ENCODE measurements at regions of chr12 and their contacts with region 1.

Region 1: GRCh38 chr12:121888478-121889266 is at the start of gene PSMD9:
- DNase-seq: peak; percentile 98
- ATAC-seq: peak; percentile 99 to 100 (median 99)
- H3K4me3 ChIP-seq: peak within 1 kb of the TSS; percentile 62 to 99 (median 92)
- H3K27ac ChIP-seq: peak within 1 kb of the TSS; percentile 79 to 98 (median 96)
- H3K4me1 ChIP-seq: peaks cover 8 to 31% (median 24%) of the 10 kb centered on the region in 9 donors
- H3K27me3 ChIP-seq: no peaks in the 10 kb centered on the region
- CTCF ChIP-seq: peak; percentile 35 to 79 (median 66)
- total RNA-seq, gene PSMD9: 29.3 to 39.9 (median 34.4) TPM

Region 2: DNA sequence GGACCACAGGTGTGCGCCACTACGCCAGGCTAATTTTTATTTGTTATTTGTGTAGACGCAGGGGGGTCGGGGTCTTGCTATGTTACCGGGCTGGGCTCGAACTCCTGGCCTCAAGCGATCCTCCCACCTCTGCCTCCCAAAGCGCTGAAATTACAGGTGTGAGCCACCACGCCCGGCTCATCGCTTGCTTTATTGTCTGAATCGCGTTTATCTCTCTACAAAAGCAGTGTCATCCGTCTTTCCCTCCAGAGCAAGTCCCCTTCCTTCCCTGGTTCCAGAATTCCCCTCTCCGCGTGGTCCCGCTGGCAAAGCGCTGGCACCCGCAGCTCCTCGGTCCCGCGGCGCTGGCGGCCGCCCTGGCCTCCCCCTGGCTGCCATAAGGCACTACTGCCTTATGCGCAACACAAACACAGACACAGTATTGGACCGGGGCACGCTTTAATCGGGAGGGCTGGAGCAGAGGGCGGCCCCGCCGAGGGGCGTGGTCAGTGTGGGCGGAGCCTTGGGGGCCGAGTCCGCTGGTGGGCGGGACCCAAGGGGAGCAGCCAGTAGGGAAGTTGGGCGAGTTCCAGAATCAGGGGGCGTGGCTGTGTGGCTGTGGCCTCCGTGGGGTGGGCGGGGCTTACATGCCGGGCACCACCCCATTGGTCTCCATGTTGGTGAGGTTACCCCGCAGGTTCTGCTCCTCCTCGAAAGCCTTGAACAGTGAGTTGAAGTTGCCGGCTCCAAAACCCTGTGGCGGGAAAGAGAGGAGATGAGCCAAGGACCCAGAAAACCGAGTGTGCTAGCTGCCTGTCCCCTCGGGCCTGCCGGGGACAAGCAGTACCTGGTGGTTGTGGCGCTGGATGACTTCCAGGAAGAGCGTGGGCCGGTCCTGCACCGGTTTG is 49.3 kb before region 1 on chr12:
- intact Hi-C with region 1: loop called in 2 of 10 experiments (anchors 2 to 10 kb)
- DNase-seq: peak; percentile 99 to 100
- ATAC-seq: peak; percentile 98 to 100 (median 99)
- H3K4me3 ChIP-seq: peak overlapping the region; percentile 49 to 70 (median 62)
- H3K27ac ChIP-seq: peak overlapping the region in 9 of 10 donors; percentile 51 to 76 (median 62)
- H3K4me1 ChIP-seq: peaks cover 0 to 17% (median 11%) of the 10 kb centered on the region in 9 donors
- H3K27me3 ChIP-seq: no peaks in the 10 kb centered on the region
- CTCF ChIP-seq: peak; percentile 7 to 66 (median 50)

Region 3: GRCh38 chr12:121964813-121965643 is 76.4 kb after region 1 on chr12:
- intact Hi-C with region 1: no loop called
- DNase-seq: no peak
- ATAC-seq: peak in 3 of 8 donors; percentile 6 to 50 (median 17)
- H3K4me3 ChIP-seq: no peak overlapping the region
- H3K27ac ChIP-seq: no peak overlapping the region
- H3K4me1 ChIP-seq: peaks cover 0 to 14% (median 4%) of the 10 kb centered on the region in 9 donors
- H3K27me3 ChIP-seq: no peaks in the 10 kb centered on the region
- CTCF ChIP-seq: no peak

Region 4: GRCh38 chr12:122225683-122226407 is 337.2 kb after region 1 on chr12 and contains the start of gene DIABLO:
- intact Hi-C with region 1: no loop called
- DNase-seq: peak; percentile 100
- ATAC-seq: peak; percentile 97 to 99 (median 98)
- H3K4me3 ChIP-seq: peak within 1 kb of the TSS; percentile 67 to 97 (median 89)
- H3K27ac ChIP-seq: peak within 1 kb of the TSS; percentile 91 to 97 (median 95)
- H3K4me1 ChIP-seq: peaks cover 10 to 35% (median 26%) of the 10 kb centered on the region in 9 donors
- H3K27me3 ChIP-seq: no peaks in the 10 kb centered on the region
- CTCF ChIP-seq: no peak
- total RNA-seq, gene DIABLO: 25.7 to 35.2 (median 32.8) TPM